Kidney (tissue), 22 donors: ENCODE measurements at regions of chr5 and their contacts with region 1.

Region 1: DNA sequence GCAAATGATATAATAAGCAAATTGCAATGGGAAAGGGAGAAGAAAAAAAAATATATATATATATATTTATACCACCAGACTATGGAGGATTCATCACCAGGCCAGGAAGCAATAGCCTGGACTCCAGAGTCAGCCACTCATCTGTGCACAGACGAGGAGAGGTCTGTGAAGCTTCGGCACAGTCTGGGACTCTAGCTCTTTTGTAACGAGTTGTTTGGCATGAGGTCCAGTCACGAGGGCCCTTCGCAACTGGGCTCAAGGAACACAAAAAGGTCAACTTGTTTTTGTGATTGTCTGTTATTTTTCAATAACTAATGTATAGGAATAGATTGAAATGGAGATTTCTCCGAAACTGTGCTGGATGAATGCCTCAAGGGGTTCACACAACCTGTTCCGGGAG is 14.7 kb upstream of the FGF1 start:
- DNase-seq: no peak
- H3K4me3 ChIP-seq: no peak overlapping the region
- H3K27ac ChIP-seq: no peak overlapping the region
- H3K4me1 ChIP-seq: peaks cover 2 to 20% (median 16%) of the 10 kb centered on the region in 3 donors
- H3K27me3 ChIP-seq: no peaks in the 10 kb centered on the region
- CTCF ChIP-seq: no peak

Region 2: DNA sequence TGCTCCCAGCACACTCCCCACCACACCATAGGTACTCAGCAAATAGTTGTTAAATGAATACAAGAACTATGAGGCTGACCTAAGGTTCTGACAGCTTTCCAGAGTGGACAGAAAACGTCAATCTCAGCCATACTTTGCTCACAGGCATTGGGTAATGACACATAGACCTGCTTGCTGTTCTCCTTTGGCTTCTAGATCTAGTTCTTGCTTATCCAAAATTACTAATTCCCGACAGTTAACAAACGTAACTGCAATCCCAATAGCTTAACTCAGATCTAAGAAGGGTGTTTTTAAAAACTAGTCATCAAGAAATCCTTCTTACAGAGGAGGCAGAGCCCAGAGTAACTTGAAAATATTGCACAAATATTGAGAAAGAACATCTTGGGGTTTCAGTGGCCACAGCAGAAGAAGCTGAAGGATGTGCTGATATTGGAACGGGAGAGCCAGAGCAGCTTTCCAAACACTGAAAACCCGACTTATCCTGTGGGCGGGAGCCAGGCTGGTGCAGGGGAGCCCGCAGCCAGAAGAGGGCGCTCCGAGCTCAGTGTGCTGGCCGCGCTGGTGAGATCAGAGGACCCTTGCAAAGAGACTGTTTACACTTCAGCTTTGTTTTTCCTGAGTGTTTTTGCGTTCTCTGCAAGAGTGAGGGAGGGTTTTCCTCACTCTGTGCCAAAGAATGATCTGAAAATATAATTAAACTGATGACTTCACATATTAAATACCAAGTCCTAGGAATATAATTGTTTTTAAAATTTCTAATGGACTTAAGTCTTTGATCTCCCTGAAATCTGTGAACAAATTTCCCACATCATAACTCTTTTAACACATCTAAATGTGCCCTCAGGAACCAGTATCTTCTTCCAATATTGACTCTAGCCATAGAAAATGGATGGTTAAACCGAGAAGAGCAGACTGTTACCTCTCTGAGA is 45.0 kb before region 1 on chr5:
- intact Hi-C with region 1: loop called (anchors 10 kb)
- DNase-seq: peak; percentile 89 to 95 (median 90)
- H3K4me3 ChIP-seq: no peak overlapping the region
- H3K27ac ChIP-seq: no peak overlapping the region
- H3K4me1 ChIP-seq: peaks cover 0 to 4% (median 2%) of the 10 kb centered on the region in 3 donors
- H3K27me3 ChIP-seq: no peaks in the 10 kb centered on the region
- CTCF ChIP-seq: peak; percentile 98